ENCODE measurements at regions of chr14 and their contacts with region 1.

Region 1: GRCh38 chr14:64764641-64765520 is 60.7 kb downstream of the PLEKHG3 start:
- DNase-seq: peak in 1 of 2 experiments; percentile 72
- H3K4me3 ChIP-seq: peak overlapping the region; percentile 27; the same call in 1 of the 2 replicates
- H3K27ac ChIP-seq: no peak overlapping the region
- H3K4me1 ChIP-seq: peaks cover 39% of the 10 kb centered on the region
- H3K27me3 ChIP-seq: no peaks in the 10 kb centered on the region
- CTCF ChIP-seq: peak; percentile 92

Region 2: GRCh38 chr14:64338616-64339316 is 426.1 kb before region 1 on chr14:
- CTCF ChIA-PET with region 1: no interaction called
- POLR2A ChIA-PET with region 1: no interaction called
- intact Hi-C with region 1: loop called (anchors 5 kb)
- DNase-seq: peak; percentile 98
- H3K4me3 ChIP-seq: peak overlapping the region; percentile 94
- H3K27ac ChIP-seq: peak overlapping the region; percentile 66
- H3K4me1 ChIP-seq: peaks cover 20% of the 10 kb centered on the region
- H3K27me3 ChIP-seq: no peaks in the 10 kb centered on the region
- CTCF ChIP-seq: no peak

Region 3: GRCh38 chr14:64636208-64636979 is 128.5 kb before region 1 on chr14:
- CTCF ChIA-PET with region 1: interaction called, 3 read pairs
- POLR2A ChIA-PET with region 1: no interaction called
- intact Hi-C with region 1: loop called (anchors 1 kb)
- DNase-seq: peak in 1 of 2 experiments; percentile 68
- H3K4me3 ChIP-seq: no peak overlapping the region
- H3K27ac ChIP-seq: no peak overlapping the region
- H3K4me1 ChIP-seq: peaks cover 34% of the 10 kb centered on the region
- H3K27me3 ChIP-seq: no peaks in the 10 kb centered on the region
- CTCF ChIP-seq: peak; percentile 98

Region 4: DNA sequence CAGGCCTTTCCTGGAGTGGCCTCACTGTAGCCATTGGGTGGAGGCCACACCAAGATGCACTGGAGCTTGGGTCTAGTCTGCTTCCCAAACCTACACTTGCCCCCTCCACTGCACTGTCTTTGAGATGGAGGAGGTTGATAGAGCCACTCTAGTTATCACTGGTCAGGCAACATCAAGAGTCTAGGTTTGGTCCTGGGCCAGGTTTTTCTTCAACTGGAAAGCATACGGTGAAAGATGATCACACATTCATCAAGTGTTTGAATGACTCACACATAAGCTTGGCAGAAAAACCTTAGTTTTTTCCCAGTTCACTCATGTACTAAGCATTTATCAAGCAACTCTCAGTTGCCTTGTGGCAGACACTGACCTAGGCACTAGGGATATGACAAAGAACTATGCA is 23.8 kb after region 1 on chr14:
- CTCF ChIA-PET with region 1: interaction called, 4 read pairs
- POLR2A ChIA-PET with region 1: no interaction called
- intact Hi-C with region 1: loop called (anchors 2 kb)
- DNase-seq: peak; percentile 59 to 88
- H3K4me3 ChIP-seq: no peak overlapping the region
- H3K27ac ChIP-seq: no peak overlapping the region
- H3K4me1 ChIP-seq: peaks cover 16% of the 10 kb centered on the region
- H3K27me3 ChIP-seq: no peaks in the 10 kb centered on the region
- CTCF ChIP-seq: no peak

Region 5: DNA sequence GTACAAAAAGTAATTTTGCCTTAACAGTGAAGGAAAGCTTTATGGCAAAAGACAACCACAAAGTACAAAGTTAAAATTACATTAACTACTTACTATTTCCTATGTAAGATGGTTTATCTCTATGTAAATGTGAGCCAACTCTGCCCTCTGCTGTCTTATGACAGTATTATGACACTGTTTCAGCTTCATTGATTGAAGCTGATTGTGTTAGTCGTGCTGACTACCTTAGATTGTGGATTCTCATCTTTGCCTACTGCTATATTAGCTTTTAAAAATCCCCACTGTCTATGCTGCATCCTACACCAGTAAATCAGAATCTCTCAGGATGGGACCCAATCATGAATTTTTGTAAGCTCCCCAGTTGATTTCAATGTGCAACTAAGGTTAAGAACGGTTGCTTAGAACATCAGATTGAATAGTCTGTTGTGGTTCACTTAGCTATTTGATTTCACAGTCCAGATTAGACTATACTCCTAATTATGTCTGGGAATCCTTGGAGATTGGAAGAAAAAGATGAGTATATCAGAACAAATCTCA is 127.0 kb after region 1 on chr14:
- CTCF ChIA-PET with region 1: interaction called, 7 read pairs
- POLR2A ChIA-PET with region 1: no interaction called
- intact Hi-C with region 1: loop called (anchors 5 kb)
- DNase-seq: peak; percentile 23 to 63
- H3K4me3 ChIP-seq: no peak overlapping the region
- H3K27ac ChIP-seq: no peak overlapping the region
- H3K4me1 ChIP-seq: no peaks in the 10 kb centered on the region
- H3K27me3 ChIP-seq: no peaks in the 10 kb centered on the region
- CTCF ChIP-seq: peak; percentile 89

Region 6: DNA sequence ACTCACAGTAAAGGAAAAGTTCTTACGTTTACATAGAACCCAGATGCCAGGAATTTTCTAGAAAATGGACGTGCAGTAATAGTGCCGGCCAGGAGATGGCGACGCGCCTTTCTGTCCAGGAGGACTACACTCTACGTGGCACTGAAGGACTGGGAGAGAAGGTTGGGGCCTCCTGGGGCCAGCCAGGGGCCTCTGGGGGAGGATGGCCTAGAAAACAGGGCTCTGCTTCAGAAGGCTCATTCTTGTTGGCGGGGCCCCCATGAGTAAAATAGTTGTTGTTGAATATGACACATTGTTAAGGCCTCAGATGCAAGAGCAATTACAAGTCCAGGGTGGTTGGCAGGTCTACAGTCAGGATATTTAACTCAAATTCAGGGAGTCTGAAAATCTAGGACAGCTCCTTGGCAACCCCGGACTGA is 457.6 kb after region 1 on chr14:
- CTCF ChIA-PET with region 1: no interaction called
- POLR2A ChIA-PET with region 1: no interaction called
- intact Hi-C with region 1: no loop called
- DNase-seq: peak; percentile 33 to 40
- H3K4me3 ChIP-seq: no peak overlapping the region
- H3K27ac ChIP-seq: no peak overlapping the region
- H3K4me1 ChIP-seq: peaks cover 30% of the 10 kb centered on the region
- H3K27me3 ChIP-seq: no peaks in the 10 kb centered on the region
- CTCF ChIP-seq: peak; percentile 93

Measured in PC-9 (cell line).